ENCODE measurements at regions of chr10 and their contacts with region 1.

Region 1: GRCh38 chr10:62183442-62183841 is 85.2 kb downstream of the RTKN2 start:
- DNase-seq: peak; percentile 53
- ATAC-seq: peak; percentile 54
- H3K4me3 Mint-ChIP-seq: peak overlapping the region; percentile 44
- H3K27ac Mint-ChIP-seq: peak overlapping the region; percentile 99
- H3K4me1 Mint-ChIP-seq: peaks cover 89% of the 10 kb centered on the region
- H3K27me3 Mint-ChIP-seq: no peaks in the 10 kb centered on the region

Region 2: DNA sequence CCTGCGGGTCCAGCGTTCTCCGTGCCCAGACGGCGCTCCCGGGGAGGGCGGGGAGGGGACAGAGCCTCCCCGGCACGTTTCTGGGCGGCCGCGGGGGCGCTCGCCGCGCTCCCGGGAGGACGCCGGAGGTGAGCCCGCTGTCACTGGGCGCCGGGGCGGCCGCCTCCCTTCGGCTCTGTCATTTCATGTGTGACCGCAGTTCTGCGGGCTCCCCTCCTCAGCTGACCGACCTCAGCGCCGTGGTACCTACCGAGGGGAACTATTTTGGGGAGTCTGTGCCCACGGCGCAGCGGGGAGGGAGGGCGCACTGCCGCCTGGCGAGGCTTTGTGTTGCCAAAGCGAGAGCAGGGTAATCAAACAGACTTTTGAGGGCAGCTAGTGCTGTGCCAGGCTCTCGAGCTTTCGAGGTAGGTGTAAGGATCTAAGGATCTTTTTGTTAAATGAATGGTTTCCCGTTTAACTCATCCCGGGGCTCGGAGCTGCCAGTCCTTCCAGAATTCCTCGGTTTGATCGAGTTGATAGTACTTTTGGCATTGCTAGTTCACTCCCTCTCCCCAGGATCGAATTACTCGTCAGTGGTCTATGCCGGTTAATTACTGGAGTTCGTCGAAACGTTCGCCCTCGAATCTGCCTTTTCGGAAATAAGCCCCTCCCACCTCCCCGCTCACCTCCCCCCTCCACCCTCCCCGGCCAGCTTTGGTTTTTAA is 280.1 kb before region 1 on chr10:
- CTCF ChIA-PET with region 1: interaction called, 4 read pairs
- POLR2A ChIA-PET with region 1: interaction called, 10 read pairs
- intact Hi-C with region 1: loop called (anchors 1 kb)
- DNase-seq: peak; percentile 86
- ATAC-seq: peak; percentile 46
- H3K4me3 Mint-ChIP-seq: peak overlapping the region; percentile 94
- H3K27ac Mint-ChIP-seq: peak overlapping the region; percentile 100
- H3K4me1 Mint-ChIP-seq: peaks cover 40% of the 10 kb centered on the region
- H3K27me3 Mint-ChIP-seq: no peaks in the 10 kb centered on the region

Region 3: GRCh38 chr10:61992671-61993668 is 190.5 kb before region 1 on chr10:
- CTCF ChIA-PET with region 1: interaction called, 7 read pairs
- POLR2A ChIA-PET with region 1: interaction called, 13 read pairs
- intact Hi-C with region 1: loop called (anchors 1 to 2 kb)
- DNase-seq: peak; percentile 74
- ATAC-seq: peak; percentile 50
- H3K4me3 Mint-ChIP-seq: peak overlapping the region; percentile 64
- H3K27ac Mint-ChIP-seq: peak overlapping the region; percentile 95
- H3K4me1 Mint-ChIP-seq: peaks cover 87% of the 10 kb centered on the region
- H3K27me3 Mint-ChIP-seq: no peaks in the 10 kb centered on the region

Region 4: GRCh38 chr10:62121187-62121530 is 62.3 kb before region 1 on chr10:
- CTCF ChIA-PET with region 1: no interaction called
- POLR2A ChIA-PET with region 1: interaction called, 3 read pairs
- intact Hi-C with region 1: loop called in 1 of 2 experiments (anchors 2 kb)
- DNase-seq: no peak
- ATAC-seq: peak; percentile 85
- H3K4me3 Mint-ChIP-seq: no peak overlapping the region
- H3K27ac Mint-ChIP-seq: no peak overlapping the region
- H3K4me1 Mint-ChIP-seq: peaks cover 17% of the 10 kb centered on the region
- H3K27me3 Mint-ChIP-seq: no peaks in the 10 kb centered on the region

Region 5: GRCh38 chr10:62352356-62352970 is 169.0 kb after region 1 on chr10:
- CTCF ChIA-PET with region 1: no interaction called
- POLR2A ChIA-PET with region 1: no interaction called
- intact Hi-C with region 1: loop called in 1 of 2 experiments (anchors 2 kb)
- DNase-seq: peak; percentile 56
- ATAC-seq: peak; percentile 97
- H3K4me3 Mint-ChIP-seq: no peak overlapping the region
- H3K27ac Mint-ChIP-seq: peak overlapping the region; percentile 86
- H3K4me1 Mint-ChIP-seq: peaks cover 21% of the 10 kb centered on the region
- H3K27me3 Mint-ChIP-seq: peaks cover 8% of the 10 kb centered on the region

Region 6: DNA sequence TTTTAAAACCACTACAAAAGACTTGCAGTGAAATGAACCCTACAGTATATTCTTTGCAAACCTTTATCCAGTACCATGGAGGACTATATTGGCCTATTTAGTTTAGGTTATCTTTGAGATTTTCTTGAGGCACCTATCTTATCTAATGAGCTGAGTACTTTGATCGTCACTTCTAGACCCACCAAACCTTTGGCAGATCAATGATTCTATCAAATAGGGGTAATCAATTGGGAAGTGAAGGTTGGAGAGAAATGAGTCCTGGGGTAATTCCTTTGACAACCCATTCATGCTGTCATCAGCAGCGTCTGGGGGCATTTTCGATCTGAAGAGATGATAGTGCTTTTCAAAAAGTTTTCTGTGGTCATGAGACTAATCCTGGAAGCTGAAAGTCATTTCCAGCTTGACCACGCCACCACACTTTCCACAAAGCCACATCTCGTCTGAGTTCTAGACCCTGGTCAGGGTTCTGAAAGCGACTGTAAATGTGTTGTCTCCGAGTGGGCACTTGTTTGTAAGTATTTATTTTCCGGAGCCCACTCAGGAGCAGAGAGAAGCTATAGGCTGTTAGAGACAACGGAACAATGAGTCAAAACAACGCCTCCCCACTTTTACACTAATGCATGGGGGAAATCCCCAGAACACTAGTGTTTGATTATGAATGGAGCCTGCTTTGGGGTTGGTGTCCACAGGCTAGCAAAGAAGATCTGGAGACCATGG is 627.9 kb after region 1 on chr10:
- CTCF ChIA-PET with region 1: interaction called, 3 read pairs
- POLR2A ChIA-PET with region 1: no interaction called
- intact Hi-C with region 1: loop called (anchors 1 to 5 kb)
- DNase-seq: peak; percentile 93
- ATAC-seq: peak; percentile 48
- H3K4me3 Mint-ChIP-seq: peak overlapping the region; percentile 99
- H3K27ac Mint-ChIP-seq: peak overlapping the region; percentile 87
- H3K4me1 Mint-ChIP-seq: peaks cover 75% of the 10 kb centered on the region
- H3K27me3 Mint-ChIP-seq: no peaks in the 10 kb centered on the region

Measured in activated CD4-positive, alpha-beta T cell treated with anti-CD3 and anti-CD28 coated beads for 36 hours (primary cell).